ENCODE measurements at regions of chr7 and their contacts with region 1.

Region 1: GRCh38 chr7:2471022-2471329 is 5.2 kb downstream of the GRIFIN start:
- DNase-seq: no peak
- ATAC-seq: no peak
- H3K4me3 Mint-ChIP-seq: no peak overlapping the region
- H3K27ac Mint-ChIP-seq: no peak overlapping the region
- H3K4me1 Mint-ChIP-seq: peaks cover 7% of the 10 kb centered on the region
- H3K27me3 Mint-ChIP-seq: peaks cover 15% of the 10 kb centered on the region

Region 2: DNA sequence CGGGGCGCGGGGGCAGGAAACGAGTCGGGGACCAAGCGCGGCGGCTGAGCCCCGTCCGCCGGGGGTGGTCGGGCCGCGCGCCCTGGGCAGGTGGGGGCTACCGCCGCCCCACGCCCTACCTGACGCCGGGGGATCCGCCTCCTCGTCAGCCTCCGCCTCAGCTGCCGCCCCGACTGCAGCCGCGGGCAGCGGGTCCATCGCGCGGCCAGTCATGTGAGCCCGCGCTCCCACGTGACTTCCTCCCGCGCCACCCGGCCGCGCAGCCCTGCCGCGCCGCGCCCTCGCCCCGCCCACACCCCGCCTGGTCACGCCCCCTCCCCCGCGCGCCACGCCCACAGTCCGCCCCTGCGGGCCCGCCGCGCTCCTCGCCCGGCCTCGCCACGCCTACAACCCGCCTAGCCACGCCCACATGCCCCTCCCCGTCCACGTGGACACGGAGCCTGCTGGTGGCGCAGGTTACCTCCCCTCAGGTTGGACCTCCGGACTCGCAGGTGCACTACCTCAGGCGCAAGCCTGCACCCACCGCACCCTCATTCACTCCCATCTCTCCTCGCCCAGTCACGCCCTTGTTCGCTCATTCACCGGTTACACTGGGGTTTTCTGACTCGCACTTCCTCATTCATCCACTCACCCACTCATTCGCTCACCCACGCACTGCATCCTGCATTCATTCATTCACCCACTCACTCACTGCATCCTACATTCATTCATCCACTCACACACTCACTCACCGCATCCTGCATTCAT is 156.6 kb before region 1 on chr7 and contains the start of gene SNX8:
- CTCF ChIA-PET with region 1: no interaction called
- POLR2A ChIA-PET with region 1: no interaction called
- DNase-seq: peak; percentile 97
- ATAC-seq: peak; percentile 93
- H3K4me3 Mint-ChIP-seq: peak within 1 kb of the TSS; percentile 89
- H3K27ac Mint-ChIP-seq: peak within 1 kb of the TSS; percentile 86
- H3K4me1 Mint-ChIP-seq: peaks cover 14% of the 10 kb centered on the region
- H3K27me3 Mint-ChIP-seq: peaks cover 2% of the 10 kb centered on the region
- total RNA-seq, gene SNX8: 28.3 to 35.8 TPM

Region 3: DNA sequence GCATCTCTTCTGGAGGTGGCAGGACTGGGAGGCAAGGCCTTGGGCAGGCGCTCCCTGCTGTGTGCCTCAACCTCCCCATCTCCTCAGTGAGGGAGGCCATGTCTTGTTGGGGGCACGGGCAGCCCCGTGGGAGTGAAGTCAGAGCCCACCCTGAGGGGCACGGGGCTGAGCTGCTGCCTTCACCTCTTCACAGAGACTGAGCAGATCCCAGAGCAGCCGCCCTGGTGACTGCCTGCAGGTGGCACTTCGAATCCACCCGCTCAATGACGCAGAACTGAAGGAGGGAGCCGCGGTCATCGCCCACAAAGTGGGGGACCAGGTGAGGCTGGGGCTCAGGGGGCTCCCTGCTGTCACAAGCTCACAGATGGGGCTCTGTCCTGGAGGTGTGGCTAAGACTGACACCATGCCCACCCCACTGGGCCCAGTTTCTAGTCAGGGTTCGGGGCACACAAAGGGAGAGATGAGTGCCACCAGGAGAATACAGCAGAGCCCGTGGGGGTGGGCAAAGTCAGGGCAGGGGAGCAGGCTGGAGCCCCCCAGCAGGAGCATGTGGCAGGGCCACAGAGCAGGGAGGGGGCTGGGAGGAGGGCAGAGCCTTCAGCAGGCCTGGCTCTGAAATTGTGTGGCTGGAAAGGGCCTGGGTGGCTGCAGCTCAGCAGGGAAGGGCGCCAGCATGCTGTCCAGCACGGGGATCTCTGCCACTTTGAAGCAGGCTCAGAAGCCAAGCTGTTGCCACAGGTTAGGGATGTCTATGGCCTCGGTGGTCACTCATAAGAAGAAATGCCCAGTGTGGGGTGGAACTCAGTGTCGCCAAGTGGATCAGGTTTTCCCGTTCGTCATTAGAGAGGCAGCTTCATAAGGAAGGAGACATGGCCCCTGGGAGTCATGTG is 86.4 kb before region 1 on chr7:
- CTCF ChIA-PET with region 1: interaction called, 13 read pairs
- POLR2A ChIA-PET with region 1: no interaction called
- DNase-seq: peak; percentile 26
- ATAC-seq: no peak
- H3K4me3 Mint-ChIP-seq: no peak overlapping the region
- H3K27ac Mint-ChIP-seq: no peak overlapping the region
- H3K4me1 Mint-ChIP-seq: peaks cover 2% of the 10 kb centered on the region
- H3K27me3 Mint-ChIP-seq: no peaks in the 10 kb centered on the region

Region 4: GRCh38 chr7:2451171-2452073 is 19.6 kb before region 1 on chr7:
- CTCF ChIA-PET with region 1: interaction called, 45 read pairs
- POLR2A ChIA-PET with region 1: interaction called, 5 read pairs
- DNase-seq: peak; percentile 82
- ATAC-seq: peak; percentile 98
- H3K4me3 Mint-ChIP-seq: peak overlapping the region; percentile 45
- H3K27ac Mint-ChIP-seq: peak overlapping the region; percentile 15
- H3K4me1 Mint-ChIP-seq: peaks cover 15% of the 10 kb centered on the region
- H3K27me3 Mint-ChIP-seq: peaks cover 10% of the 10 kb centered on the region

Region 5: GRCh38 chr7:2508327-2509215 is 37.6 kb after region 1 on chr7:
- CTCF ChIA-PET with region 1: no interaction called
- POLR2A ChIA-PET with region 1: no interaction called
- DNase-seq: peak; percentile 92
- ATAC-seq: peak; percentile 76
- H3K4me3 Mint-ChIP-seq: peak overlapping the region; percentile 70
- H3K27ac Mint-ChIP-seq: peak overlapping the region; percentile 92
- H3K4me1 Mint-ChIP-seq: peaks cover 62% of the 10 kb centered on the region
- H3K27me3 Mint-ChIP-seq: no peaks in the 10 kb centered on the region

Measured in activated CD8-positive, alpha-beta T cell treated with anti-CD3 and anti-CD28 coated beads, Interleukin-2, amount 10 ng/mL, durations not matched to agents 7 days and 5 days (primary cell).